HepG2 (cell line): ENCODE measurements at regions of chr6 and their contacts with region 1.

Region 1: GRCh38 chr6:31952140-31952805 is 6.4 kb downstream of the CFB start:
- DNase-seq: peak; percentile 71
- ATAC-seq: peak; percentile 88
- H3K4me3 ChIP-seq: no peak overlapping the region
- H3K27ac ChIP-seq: peak overlapping the region; percentile 27
- H3K4me1 ChIP-seq: peaks cover 38% of the 10 kb centered on the region
- H3K27me3 ChIP-seq: no peaks in the 10 kb centered on the region
- CTCF ChIP-seq: peak; percentile 93
- EP300 ChIP-seq: no peak
- POLR2A ChIP-seq: no peak
- RAD21 ChIP-seq: peak; percentile 97

Region 2: GRCh38 chr6:31901953-31902643 is 50.2 kb before region 1 on chr6 and contains the start of gene ZBTB12:
- CTCF ChIA-PET with region 1: interaction called, 4 read pairs
- POLR2A ChIA-PET with region 1: interaction called, 69 read pairs
- in situ Hi-C with region 1: loop called (anchors 5 kb)
- intact Hi-C with region 1: loop called (anchors 1 kb)
- DNase-seq: peak; percentile 96
- ATAC-seq: peak; percentile 76
- H3K4me3 ChIP-seq: peak within 1 kb of the TSS; percentile 65 to 78 (median 67)
- H3K27ac ChIP-seq: peak within 1 kb of the TSS; percentile 60
- H3K4me1 ChIP-seq: peaks cover 51% of the 10 kb centered on the region
- H3K27me3 ChIP-seq: peaks cover 1 to 13% of the 10 kb centered on the region in 2 experiments; a peak in 2 of 5 replicates
- CTCF ChIP-seq: peak; percentile 48
- EP300 ChIP-seq: peak in 1 of 2 experiments; percentile 30; a peak in 1 of 4 replicates
- POLR2A ChIP-seq: peak; percentile 58 to 78; a peak in 3 of 4 replicates
- RAD21 ChIP-seq: peak; percentile 88
- total RNA-seq, gene ZBTB12: 6.0 and 6.8 TPM in 2 replicates

Region 3: GRCh38 chr6:31908791-31909190 is 43.5 kb before region 1 on chr6:
- CTCF ChIA-PET with region 1: no interaction called
- POLR2A ChIA-PET with region 1: interaction called, 69 read pairs
- in situ Hi-C with region 1: loop called (anchors 5 kb)
- intact Hi-C with region 1: no loop called
- DNase-seq: peak; percentile 60
- ATAC-seq: peak; percentile 16; the same call in 1 of the 3 replicates
- H3K4me3 ChIP-seq: no peak overlapping the region
- H3K27ac ChIP-seq: no peak overlapping the region
- H3K4me1 ChIP-seq: peaks cover 49% of the 10 kb centered on the region
- H3K27me3 ChIP-seq: peaks cover 1 to 6% of the 10 kb centered on the region in 2 experiments; a peak in 1 of 5 replicates
- CTCF ChIP-seq: no peak
- EP300 ChIP-seq: no peak
- POLR2A ChIP-seq: no peak
- RAD21 ChIP-seq: no peak

Region 4: GRCh38 chr6:31922942-31923341 is 29.3 kb before region 1 on chr6:
- CTCF ChIA-PET with region 1: interaction called, 5 read pairs
- POLR2A ChIA-PET with region 1: interaction called, 35 read pairs
- in situ Hi-C with region 1: no loop called
- intact Hi-C with region 1: loop called (anchors 2 kb)
- DNase-seq: peak; percentile 73
- ATAC-seq: peak; percentile 44
- H3K4me3 ChIP-seq: no peak overlapping the region
- H3K27ac ChIP-seq: no peak overlapping the region
- H3K4me1 ChIP-seq: peaks cover 80% of the 10 kb centered on the region
- H3K27me3 ChIP-seq: no peaks in the 10 kb centered on the region; a peak in 1 of 5 replicates
- CTCF ChIP-seq: peak; percentile 84
- EP300 ChIP-seq: no peak
- POLR2A ChIP-seq: no peak
- RAD21 ChIP-seq: peak; percentile 77

Region 5: DNA sequence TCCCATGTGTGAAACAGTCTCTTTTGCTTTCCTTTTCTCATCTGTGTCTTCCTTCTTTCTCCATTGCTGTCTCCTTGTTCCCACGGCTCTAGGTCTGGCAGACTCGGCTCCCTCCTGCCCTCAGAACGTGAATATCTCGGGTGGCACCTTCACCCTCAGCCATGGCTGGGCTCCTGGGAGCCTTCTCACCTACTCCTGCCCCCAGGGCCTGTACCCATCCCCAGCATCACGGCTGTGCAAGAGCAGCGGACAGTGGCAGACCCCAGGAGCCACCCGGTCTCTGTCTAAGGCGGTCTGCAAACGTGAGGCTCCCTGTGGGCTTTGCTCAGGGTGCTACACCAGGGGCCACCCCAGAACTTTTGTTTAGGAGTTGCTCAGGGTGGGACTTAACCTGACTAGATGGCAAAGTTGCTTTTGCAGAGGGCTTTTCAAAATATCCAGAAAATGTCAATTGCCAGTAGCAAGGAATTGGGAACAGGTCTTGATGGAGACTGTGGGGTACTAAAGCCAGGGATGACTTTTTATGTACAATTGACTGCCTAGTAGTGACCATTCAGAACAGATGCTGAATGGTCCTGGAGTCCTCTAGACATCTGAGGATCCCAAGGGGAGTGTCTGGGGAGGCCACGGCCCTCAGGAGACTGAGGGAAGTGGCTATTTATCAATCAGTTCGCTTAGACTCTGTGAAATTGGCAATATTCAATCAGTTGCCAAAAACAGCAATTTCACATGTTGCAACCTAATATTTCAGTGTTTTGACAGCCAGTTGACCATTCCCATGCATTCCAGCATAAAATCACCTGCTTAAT is 24.2 kb before region 1 on chr6:
- CTCF ChIA-PET with region 1: interaction called, 5 read pairs
- POLR2A ChIA-PET with region 1: interaction called, 46 read pairs
- in situ Hi-C with region 1: no loop called
- intact Hi-C with region 1: loop called (anchors 2 kb)
- DNase-seq: no peak
- ATAC-seq: peak; percentile 67
- H3K4me3 ChIP-seq: peak overlapping the region; percentile 69 to 81 (median 72)
- H3K27ac ChIP-seq: peak overlapping the region; percentile 88
- H3K4me1 ChIP-seq: peaks cover 69% of the 10 kb centered on the region
- H3K27me3 ChIP-seq: no peaks in the 10 kb centered on the region; a peak in 1 of 5 replicates
- CTCF ChIP-seq: no peak
- EP300 ChIP-seq: no peak
- POLR2A ChIP-seq: no peak
- RAD21 ChIP-seq: no peak

Region 6: DNA sequence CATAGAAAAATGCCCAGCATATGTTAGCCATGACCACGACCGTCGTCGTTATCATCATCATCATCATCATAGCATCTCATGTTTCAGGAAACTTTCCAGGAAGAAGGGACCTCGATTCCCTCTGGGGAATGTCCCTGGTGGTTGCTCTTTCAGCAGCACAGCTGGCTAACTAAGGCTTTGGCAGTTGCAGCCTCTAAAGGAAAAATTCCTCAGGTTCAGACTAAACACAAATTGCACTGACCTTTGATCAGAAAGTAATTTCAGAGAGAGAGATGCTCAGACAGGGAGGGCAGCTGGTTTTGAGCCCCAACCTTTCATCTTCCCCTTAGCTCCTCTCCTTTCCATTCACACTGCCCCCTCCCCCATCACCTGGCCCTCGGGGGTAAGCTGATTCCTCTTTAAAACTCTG is 12.0 kb before region 1 on chr6:
- CTCF ChIA-PET with region 1: interaction called, 3 read pairs
- POLR2A ChIA-PET with region 1: interaction called, 69 read pairs
- in situ Hi-C with region 1: no loop called
- intact Hi-C with region 1: no loop called
- DNase-seq: peak; percentile 78
- ATAC-seq: peak; percentile 59
- H3K4me3 ChIP-seq: no peak overlapping the region
- H3K27ac ChIP-seq: peak overlapping the region; percentile 48
- H3K4me1 ChIP-seq: peaks cover 62% of the 10 kb centered on the region
- H3K27me3 ChIP-seq: no peaks in the 10 kb centered on the region
- CTCF ChIP-seq: no peak
- EP300 ChIP-seq: no peak
- POLR2A ChIP-seq: no peak
- RAD21 ChIP-seq: no peak

Region 7: GRCh38 chr6:31971993-31972708 is 19.9 kb after region 1 on chr6 and contains the start of gene DXO:
- CTCF ChIA-PET with region 1: no interaction called
- POLR2A ChIA-PET with region 1: interaction called, 142 read pairs
- in situ Hi-C with region 1: no loop called
- intact Hi-C with region 1: no loop called
- DNase-seq: peak; percentile 98
- ATAC-seq: peak; percentile 86
- H3K4me3 ChIP-seq: peak within 1 kb of the TSS; percentile 73 to 94 (median 90)
- H3K27ac ChIP-seq: peak within 1 kb of the TSS; percentile 86
- H3K4me1 ChIP-seq: peaks cover 32% of the 10 kb centered on the region
- H3K27me3 ChIP-seq: no peaks in the 10 kb centered on the region; a peak in 1 of 5 replicates
- CTCF ChIP-seq: peak; percentile 17; the same call in 1 of the 2 replicates
- EP300 ChIP-seq: peak in 1 of 2 experiments; percentile 58; a peak in 1 of 4 replicates
- POLR2A ChIP-seq: peak; percentile 52 to 60; a peak in 3 of 4 replicates
- RAD21 ChIP-seq: peak; percentile 58
- total RNA-seq, gene DXO: 10.8 and 18.6 TPM in 2 replicates

Region 8: DNA sequence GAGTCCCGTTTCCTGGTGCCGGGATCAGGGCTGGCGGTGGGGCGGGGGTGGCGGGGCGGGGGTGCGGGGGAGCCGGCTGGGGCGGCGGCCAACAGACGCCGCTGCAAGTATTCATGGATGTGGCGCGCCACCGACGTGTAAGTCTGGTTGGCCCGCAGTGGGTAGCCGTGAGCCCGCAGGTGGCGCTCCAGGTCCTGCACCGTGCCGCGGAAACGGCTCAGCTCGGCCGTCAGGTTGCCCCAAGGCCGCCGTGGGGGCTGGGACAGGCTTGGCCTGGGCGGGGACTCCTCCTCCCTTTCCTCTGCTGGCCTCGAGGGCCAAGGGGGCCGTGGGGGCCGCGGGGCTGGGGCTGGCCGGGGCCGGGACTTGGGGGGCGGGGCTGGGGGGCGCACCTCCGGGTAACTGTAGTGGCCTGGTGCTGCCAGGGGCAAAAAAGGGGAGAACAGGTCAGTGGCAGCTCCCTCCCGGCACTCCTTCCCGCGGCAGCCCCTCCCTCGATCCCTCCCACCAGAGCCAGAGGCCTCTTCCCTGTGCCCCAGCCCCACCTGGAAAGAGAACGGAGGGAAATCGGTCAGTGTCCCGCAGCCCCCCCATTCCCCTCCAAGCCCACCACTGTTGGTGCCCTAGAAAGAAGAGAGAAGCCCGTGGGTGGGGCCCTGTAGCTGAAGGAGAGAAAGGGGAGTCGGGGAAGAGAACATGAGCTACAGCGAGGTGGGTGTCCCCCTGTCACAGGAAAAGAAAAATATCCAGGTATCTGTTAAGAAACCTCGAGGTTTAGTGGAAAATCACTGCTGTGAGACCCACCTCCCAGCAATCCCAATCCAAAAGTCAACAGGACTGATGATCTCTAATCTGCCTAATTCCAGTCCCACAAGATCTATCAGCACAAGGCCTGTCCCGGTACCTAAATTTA is 135.6 kb after region 1 on chr6:
- CTCF ChIA-PET with region 1: no interaction called
- POLR2A ChIA-PET with region 1: no interaction called
- in situ Hi-C with region 1: no loop called
- intact Hi-C with region 1: no loop called
- DNase-seq: peak; percentile 82
- ATAC-seq: peak; percentile 93
- H3K4me3 ChIP-seq: peak overlapping the region; percentile 37 to 62 (median 45); a peak in 4 of 6 replicates
- H3K27ac ChIP-seq: no peak overlapping the region
- H3K4me1 ChIP-seq: peaks cover 41% of the 10 kb centered on the region
- H3K27me3 ChIP-seq: peaks cover 4 to 31% of the 10 kb centered on the region in 2 experiments
- CTCF ChIP-seq: peak; percentile 93
- EP300 ChIP-seq: no peak
- POLR2A ChIP-seq: no peak
- RAD21 ChIP-seq: peak; percentile 96

Region 9: DNA sequence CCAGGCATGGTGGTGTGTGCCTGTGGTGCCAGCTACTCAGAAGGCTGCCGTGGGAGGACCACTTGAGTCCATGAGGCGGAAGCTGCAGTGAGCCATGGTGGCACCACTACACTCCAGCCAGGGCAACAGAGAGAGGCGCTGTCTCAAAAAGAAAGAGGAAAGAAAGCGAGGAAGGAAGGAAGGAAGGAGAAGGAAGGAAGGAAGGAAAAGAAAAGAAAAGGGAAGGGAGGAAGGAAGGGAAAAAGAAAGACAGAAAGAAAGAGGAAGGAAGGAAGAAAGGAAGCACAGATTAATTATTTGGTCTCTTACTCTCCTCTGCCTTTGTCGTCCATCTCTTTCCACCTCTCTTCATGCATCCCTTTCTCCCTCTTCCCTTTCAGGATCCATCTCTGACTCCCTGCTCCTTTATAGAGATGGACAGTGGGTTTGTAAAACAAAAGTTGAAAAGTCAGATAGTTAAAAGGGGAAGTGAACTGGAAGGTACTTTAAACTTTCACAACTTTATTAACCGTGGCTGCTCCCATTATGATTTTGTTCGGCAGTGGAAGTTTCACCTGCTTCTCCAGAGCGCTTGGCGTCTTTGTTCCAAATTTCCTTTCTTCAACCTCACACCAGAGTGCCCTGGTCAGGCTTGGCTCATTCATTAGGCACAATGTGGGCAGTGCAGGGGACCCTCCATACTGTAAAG is 686.4 kb after region 1 on chr6:
- CTCF ChIA-PET with region 1: no interaction called
- POLR2A ChIA-PET with region 1: no interaction called
- in situ Hi-C with region 1: no loop called
- intact Hi-C with region 1: no loop called
- DNase-seq: no peak
- ATAC-seq: no peak
- H3K4me3 ChIP-seq: no peak overlapping the region
- H3K27ac ChIP-seq: no peak overlapping the region
- H3K4me1 ChIP-seq: no peaks in the 10 kb centered on the region
- H3K27me3 ChIP-seq: peaks cover 2 to 9% of the 10 kb centered on the region in 2 experiments; a peak in 3 of 5 replicates
- CTCF ChIP-seq: no peak
- EP300 ChIP-seq: no peak
- POLR2A ChIP-seq: no peak
- RAD21 ChIP-seq: no peak